HepG2 (cell line): ENCODE measurements at regions of chr7 and their contacts with region 1.

Region 1: DNA sequence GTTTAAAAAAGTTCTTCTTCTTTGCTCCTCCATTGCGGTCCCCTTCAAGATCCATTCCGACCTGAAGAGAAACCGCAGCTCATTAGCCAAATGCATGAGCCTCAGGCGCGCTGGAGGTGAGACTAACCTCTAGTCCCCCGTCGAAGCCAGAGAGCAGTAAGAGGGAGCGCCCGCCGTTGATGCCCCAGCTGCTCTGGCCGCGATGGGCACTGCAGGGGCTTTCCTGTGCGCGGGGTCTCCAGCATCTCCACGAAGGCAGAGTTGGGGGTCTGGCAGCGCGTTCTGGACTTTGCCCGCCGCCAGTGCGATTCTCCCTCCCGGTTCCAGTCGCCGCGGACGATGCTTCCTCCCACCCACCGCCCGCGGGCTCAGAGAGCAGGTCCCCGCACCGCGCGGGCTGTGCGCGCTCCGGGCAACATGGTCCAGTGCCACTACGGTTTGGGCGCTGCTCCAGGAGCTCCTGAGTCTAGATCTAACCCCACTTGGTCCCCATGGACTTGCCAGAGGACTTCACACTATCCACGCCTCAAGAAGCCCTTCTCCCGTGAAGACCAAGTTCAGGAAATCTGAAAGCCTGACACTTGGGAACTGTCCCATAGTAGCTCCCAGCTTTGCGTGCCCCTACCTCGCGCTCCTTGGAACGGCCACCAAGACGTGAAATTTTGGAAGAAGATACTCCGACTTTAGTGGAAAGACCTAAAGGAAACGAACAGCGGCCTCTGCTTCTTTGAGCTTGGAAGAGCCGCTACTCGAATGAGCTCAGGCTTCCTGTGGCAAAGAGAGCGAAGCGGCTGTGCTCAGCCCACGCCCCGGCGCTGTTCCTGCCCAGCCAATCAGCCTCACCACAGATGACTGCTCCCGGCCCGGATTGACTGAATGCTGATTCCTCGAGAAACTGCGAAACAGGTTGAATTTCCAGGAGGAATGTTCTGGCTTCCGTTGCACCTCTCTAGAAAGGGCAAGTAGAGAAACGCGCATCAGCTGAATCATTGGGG is at the start of gene ABCB1:
- DNase-seq: peak; percentile 63
- ATAC-seq: peak; percentile 98
- H3K4me3 ChIP-seq: peak within 1 kb of the TSS; percentile 68 to 79 (median 79)
- H3K27ac ChIP-seq: peak within 1 kb of the TSS; percentile 57
- H3K4me1 ChIP-seq: peaks cover 59% of the 10 kb centered on the region
- H3K27me3 ChIP-seq: no peaks in the 10 kb centered on the region
- CTCF ChIP-seq: peak; percentile 39; the same call in 1 of the 2 replicates
- EP300 ChIP-seq: peak in 1 of 2 experiments; percentile 35; a peak in 1 of 4 replicates
- POLR2A ChIP-seq: peak; percentile 84 to 92
- RAD21 ChIP-seq: no peak
- total RNA-seq, gene ABCB1: 25.9 and 42.8 TPM in 2 replicates

Region 2: GRCh38 chr7:86932038-86932512 is 668.4 kb before region 1 on chr7:
- CTCF ChIA-PET with region 1: no interaction called
- POLR2A ChIA-PET with region 1: no interaction called
- in situ Hi-C with region 1: no loop called
- intact Hi-C with region 1: no loop called
- DNase-seq: no peak
- ATAC-seq: no peak
- H3K4me3 ChIP-seq: no peak overlapping the region
- H3K27ac ChIP-seq: no peak overlapping the region
- H3K4me1 ChIP-seq: no peaks in the 10 kb centered on the region
- H3K27me3 ChIP-seq: no peaks in the 10 kb centered on the region
- CTCF ChIP-seq: no peak
- EP300 ChIP-seq: no peak
- POLR2A ChIP-seq: no peak
- RAD21 ChIP-seq: no peak

Region 3: DNA sequence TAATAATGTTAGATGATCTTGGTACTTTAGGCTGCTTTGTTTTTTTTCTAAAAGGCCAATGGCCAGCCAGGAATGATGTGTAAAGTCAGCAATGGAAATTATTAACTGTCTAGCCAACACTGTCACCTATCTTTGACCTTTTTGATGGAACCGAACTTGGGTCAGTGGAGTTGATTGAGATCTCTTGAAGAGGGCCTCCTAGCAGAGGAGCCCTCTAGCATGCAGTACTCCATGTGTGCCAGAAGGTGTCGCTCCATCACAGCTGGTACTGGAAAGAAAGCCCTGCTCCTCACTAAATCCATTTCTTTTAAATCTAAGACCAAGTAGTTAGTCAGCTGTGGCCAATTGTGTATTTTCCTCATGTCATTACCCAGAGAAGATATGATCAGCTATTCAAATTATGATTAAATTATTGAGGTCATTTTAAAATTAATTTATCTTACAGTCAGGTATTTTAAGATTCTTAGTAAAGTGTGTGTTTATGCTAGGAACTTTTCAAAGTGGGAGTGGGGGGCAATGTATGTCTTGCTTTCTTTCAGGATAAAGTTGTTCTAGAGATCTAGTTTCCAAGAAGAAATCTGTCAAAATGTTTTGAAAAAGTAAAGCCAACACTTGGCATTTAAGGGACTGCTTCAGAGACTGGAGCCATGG is 288.1 kb before region 1 on chr7:
- CTCF ChIA-PET with region 1: no interaction called
- POLR2A ChIA-PET with region 1: no interaction called
- in situ Hi-C with region 1: no loop called
- intact Hi-C with region 1: loop called (anchors 10 kb)
- DNase-seq: peak; percentile 56
- ATAC-seq: peak; percentile 84
- H3K4me3 ChIP-seq: no peak overlapping the region
- H3K27ac ChIP-seq: no peak overlapping the region
- H3K4me1 ChIP-seq: peaks cover 42% of the 10 kb centered on the region
- H3K27me3 ChIP-seq: no peaks in the 10 kb centered on the region
- CTCF ChIP-seq: peak; percentile 95
- EP300 ChIP-seq: no peak
- POLR2A ChIP-seq: no peak
- RAD21 ChIP-seq: peak; percentile 92

Region 4: GRCh38 chr7:87474533-87475358 is 125.7 kb before region 1 on chr7:
- CTCF ChIA-PET with region 1: no interaction called
- POLR2A ChIA-PET with region 1: no interaction called
- in situ Hi-C with region 1: no loop called
- intact Hi-C with region 1: loop called (anchors 10 kb)
- DNase-seq: no peak
- ATAC-seq: peak; percentile 16; the same call in 2 of the 3 replicates
- H3K4me3 ChIP-seq: peak overlapping the region; percentile 70 to 81 (median 74)
- H3K27ac ChIP-seq: peak overlapping the region; percentile 74
- H3K4me1 ChIP-seq: peaks cover 62% of the 10 kb centered on the region
- H3K27me3 ChIP-seq: no peaks in the 10 kb centered on the region; a peak in 1 of 5 replicates
- CTCF ChIP-seq: no peak
- EP300 ChIP-seq: no peak
- POLR2A ChIP-seq: no peak
- RAD21 ChIP-seq: no peak

Region 5: DNA sequence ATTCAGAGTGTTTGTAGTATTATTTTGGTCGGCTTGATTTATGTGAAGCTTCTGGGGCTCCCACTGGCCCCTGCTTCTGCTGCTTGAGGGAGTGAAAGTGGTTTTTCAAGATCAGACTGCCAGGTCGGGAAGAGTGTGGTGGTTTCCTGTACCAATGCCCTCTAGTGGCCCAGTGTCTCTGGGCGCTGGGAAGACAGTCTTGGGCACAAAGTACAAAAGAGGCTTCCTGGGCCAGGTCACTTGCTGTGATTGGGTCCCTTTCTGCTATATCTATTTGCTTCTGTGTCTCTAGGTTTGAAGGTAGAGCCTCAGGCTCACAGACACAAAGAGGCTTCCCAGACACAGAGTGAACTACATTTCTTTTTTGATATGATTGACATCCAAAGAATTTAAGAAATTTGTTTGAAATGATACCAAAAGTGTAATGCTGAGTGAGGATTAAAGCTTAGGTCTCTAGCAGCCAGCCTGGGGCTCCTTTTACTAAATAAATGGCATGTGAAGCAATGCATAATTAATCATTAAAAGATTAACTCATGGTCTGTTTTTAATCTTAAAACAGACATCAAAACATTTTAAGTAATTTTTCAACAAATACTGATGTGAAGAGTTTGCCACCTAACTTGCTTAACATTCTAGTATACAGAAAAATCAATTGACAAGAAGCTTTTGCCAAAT is 36.0 kb before region 1 on chr7:
- CTCF ChIA-PET with region 1: no interaction called
- POLR2A ChIA-PET with region 1: interaction called, 9 read pairs
- in situ Hi-C with region 1: no loop called
- intact Hi-C with region 1: loop called (anchors 2 kb)
- DNase-seq: peak; percentile 20
- ATAC-seq: peak; percentile 87
- H3K4me3 ChIP-seq: no peak overlapping the region
- H3K27ac ChIP-seq: peak overlapping the region; percentile 23
- H3K4me1 ChIP-seq: peaks cover 23% of the 10 kb centered on the region
- H3K27me3 ChIP-seq: no peaks in the 10 kb centered on the region
- CTCF ChIP-seq: peak; percentile 79
- EP300 ChIP-seq: no peak
- POLR2A ChIP-seq: no peak
- RAD21 ChIP-seq: no peak

Region 6: DNA sequence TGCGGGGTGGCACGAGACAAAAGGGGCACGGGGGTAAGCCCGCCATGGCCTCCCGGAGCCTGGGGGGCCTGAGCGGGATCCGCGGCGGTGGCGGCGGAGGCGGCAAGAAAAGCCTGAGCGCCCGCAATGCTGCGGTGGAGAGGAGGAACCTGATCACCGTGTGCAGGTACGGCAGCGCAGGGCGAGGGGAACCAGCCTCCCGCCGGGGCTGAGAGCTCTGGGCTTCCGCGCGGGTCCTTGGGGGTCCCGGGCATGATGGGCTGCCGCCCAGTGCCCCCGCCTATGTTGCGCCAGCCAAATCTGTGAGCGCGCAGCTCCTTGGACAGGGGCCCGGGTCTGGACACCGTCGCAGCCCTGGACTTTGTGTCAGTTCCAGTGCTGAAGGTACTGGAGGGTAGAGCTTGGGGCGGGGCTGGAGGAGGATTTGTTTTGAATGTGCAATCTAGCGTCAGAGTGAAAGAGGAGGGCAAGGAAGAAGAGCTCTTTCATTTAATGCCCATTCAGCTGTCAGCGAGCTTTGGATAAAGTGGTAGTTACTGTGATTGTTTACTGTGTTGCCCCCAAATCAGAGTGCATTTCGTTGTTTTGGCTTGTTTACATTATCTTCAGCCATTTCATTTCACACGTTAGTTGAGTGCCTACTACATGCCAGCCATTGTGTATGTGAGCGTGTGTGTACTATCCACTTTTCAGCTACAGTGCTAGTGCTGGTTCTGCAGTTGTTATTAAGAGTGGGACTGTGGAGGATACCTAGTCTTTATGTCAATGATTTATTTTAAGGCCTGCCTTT is 28.5 kb after region 1 on chr7:
- CTCF ChIA-PET with region 1: no interaction called
- POLR2A ChIA-PET with region 1: interaction called, 11 read pairs
- in situ Hi-C with region 1: no loop called
- intact Hi-C with region 1: loop called (anchors 1 kb)
- DNase-seq: peak; percentile 20
- ATAC-seq: peak; percentile 77
- H3K4me3 ChIP-seq: peak overlapping the region; percentile 64 to 84 (median 66)
- H3K27ac ChIP-seq: no peak overlapping the region
- H3K4me1 ChIP-seq: peaks cover 14% of the 10 kb centered on the region; the same call in 1 of the 2 replicates
- H3K27me3 ChIP-seq: peaks cover 0 to 6% of the 10 kb centered on the region in 2 experiments; a peak in 1 of 5 replicates
- CTCF ChIP-seq: no peak
- EP300 ChIP-seq: no peak
- POLR2A ChIP-seq: no peak
- RAD21 ChIP-seq: no peak